ENCODE measurements at regions of chr4 and their contacts with region 1.

Region 1: DNA sequence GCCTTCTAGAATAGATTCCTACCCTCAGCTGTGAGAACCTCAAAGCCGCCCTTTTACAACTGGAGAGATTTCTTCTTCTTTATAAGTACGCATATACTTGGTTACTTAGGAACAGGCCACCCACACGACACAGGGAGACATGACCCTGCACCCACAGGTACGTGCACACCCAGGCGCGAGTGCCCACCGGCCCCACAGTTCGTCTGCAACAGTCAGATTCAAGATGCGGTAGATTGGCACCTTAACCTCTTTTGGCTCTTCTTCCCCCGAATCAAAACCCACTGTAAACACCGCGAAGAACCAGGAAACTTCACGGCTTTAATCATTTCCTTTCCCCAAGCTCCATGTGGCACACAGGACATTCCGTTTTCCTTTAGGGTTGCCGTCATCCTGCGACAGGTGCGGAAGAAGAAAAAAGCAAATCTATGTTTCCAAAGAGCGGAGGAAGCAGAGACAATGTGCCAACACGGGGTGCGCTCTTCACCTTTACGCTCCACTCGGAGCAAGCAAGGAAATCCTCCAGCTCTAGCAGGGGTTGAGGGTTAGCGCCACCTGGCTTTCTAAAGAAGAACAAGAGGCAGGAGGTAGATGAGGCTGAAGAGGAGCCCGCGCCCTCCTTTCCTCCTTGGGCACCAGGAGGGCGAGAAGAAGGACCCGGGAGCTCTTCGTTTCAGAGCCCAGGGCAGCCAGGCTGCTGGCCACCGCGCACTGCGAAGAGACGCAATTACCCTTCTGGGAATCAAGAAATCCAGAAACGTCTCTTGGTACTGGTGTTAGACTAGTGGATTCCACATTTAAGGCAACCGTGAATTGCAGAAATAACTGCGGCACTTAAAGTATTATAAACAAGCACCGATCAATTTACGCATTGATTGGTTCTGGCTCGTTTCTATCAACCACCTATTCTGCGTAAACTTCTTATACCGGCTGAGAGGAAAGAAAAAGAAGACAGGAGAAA is 35.7 kb downstream of the HAND2 start:
- DNase-seq: peak; percentile 74

Region 2: DNA sequence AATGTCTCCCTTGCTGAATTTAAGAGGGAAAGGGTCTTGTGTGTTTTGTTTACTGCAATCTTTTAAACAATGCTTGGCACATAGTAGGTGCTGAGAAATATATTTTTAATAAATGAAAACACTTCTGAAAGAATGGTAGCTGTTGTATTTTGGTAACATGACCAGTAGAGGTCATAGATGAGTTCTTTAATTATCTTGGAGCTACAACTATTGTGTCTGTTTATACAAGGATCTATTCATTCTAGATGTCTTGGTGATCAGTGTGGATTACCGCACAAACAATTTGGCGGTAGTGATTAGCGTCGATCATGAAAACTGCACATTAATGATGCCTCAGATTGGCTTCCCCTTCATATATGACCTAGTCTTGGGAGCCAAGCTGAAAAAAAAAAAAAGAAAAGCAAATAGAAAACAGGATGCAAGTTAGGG is 74.0 kb before region 1 on chr4:
- CTCF ChIA-PET with region 1: interaction called, 14 read pairs
- POLR2A ChIA-PET with region 1: interaction called, 4 read pairs
- DNase-seq: peak; percentile 30

Region 3: GRCh38 chr4:173591760-173592159 is 97.5 kb after region 1 on chr4:
- CTCF ChIA-PET with region 1: no interaction called
- POLR2A ChIA-PET with region 1: no interaction called
- DNase-seq: no peak

Region 4: DNA sequence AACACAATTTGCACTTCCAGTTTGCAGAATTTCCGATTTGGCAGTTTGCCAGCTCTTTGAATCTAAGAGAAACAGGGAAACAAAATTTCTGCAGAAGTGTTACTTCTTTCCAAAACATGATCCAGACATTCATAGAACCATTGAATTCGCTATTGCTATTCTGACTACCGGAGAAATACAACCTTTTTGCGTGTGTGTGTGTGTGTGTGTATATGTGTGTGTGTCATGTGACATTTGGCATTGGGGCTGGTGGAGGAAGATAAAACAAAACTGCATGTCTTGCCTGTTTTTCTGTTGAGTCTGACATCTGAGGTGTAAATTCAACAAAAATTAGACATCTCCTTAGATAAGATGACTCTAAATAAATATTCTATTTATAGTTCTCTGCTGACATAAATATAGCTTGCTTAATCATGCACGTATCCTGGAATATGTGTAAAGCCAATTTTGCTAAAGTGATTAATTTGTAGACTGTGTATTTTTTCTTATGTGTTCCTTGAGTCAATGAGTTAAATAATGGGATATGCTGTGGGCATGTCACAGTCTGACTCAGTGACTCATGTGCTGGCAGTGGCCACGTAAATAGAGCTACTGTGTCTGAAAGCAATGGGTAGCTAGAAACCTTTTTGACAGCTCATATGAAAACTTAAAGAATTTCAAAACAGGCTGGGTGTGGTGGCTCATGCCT is 929.1 kb after region 1 on chr4:
- CTCF ChIA-PET with region 1: no interaction called
- POLR2A ChIA-PET with region 1: no interaction called
- DNase-seq: no peak